ENCODE measurements at regions of chr1 and their contacts with region 1.

Region 1: GRCh38 chr1:41573785-41574713 is 89.6 kb upstream of the EDN2 start:
- DNase-seq: peak; percentile 8
- H3K4me3 ChIP-seq: no peak overlapping the region
- H3K27me3 ChIP-seq: no peaks in the 10 kb centered on the region
- CTCF ChIP-seq: peak; percentile 96

Region 2: DNA sequence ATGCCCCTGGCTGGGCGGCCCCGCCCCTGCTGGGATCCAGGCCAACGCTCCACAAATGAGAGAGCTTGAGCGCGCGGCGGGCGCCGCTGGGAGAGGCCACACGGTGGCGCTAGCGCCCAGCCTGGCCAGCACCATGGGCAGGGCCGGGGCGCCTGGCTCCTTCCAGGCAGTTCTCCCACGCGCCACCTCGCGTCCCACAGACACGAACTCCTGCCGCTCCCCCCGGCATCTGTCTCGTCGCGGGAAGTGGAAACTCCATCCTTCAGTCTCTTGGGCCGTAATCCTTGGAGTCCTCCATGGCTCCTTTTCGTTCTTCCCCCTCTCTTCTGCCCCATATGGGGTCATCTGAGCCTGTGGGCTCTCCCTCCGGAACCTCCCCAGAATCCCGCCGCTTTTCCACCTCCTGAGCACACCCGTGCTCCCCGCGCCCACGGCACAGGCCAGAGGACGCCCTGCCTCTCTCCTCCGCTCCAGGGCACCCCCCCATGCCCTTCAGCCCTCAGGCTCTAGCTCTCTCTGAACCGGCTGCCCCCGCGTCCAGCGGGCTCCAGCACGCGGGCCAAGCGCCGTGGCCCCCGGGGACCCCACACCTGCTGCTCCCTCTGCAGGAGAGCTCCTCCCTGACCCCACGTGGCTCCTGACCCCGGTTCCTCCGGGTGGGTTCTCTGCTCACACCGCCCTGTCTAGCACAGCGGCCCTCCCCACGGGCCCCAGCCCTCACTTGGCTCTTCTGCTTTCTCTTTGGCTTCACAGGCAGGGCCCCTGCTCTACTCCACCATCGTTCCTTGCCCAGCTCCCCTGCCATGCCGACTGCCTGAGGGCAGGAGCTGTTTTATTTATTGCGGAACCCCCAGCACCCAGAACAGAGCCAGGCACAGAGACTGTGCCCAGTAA is 57.6 kb before region 1 on chr1:
- CTCF ChIA-PET with region 1: interaction called, 11 read pairs
- POLR2A ChIA-PET with region 1: no interaction called
- DNase-seq: no peak
- H3K4me3 ChIP-seq: peak overlapping the region; percentile 31
- H3K27me3 ChIP-seq: no peaks in the 10 kb centered on the region
- CTCF ChIP-seq: peak; percentile 85

Region 3: GRCh38 chr1:41560496-41560895 is 13.6 kb before region 1 on chr1:
- CTCF ChIA-PET with region 1: interaction called, 12 read pairs
- POLR2A ChIA-PET with region 1: no interaction called
- DNase-seq: no peak
- H3K4me3 ChIP-seq: no peak overlapping the region
- H3K27me3 ChIP-seq: no peaks in the 10 kb centered on the region
- CTCF ChIP-seq: no peak

Region 4: GRCh38 chr1:41589395-41589794 is 15.3 kb after region 1 on chr1:
- CTCF ChIA-PET with region 1: interaction called, 13 read pairs
- POLR2A ChIA-PET with region 1: no interaction called
- DNase-seq: no peak
- H3K4me3 ChIP-seq: no peak overlapping the region
- H3K27me3 ChIP-seq: no peaks in the 10 kb centered on the region
- CTCF ChIP-seq: no peak

Region 5: GRCh38 chr1:41791667-41792484 is 217.8 kb after region 1 on chr1:
- CTCF ChIA-PET with region 1: interaction called, 60 read pairs
- POLR2A ChIA-PET with region 1: no interaction called
- DNase-seq: no peak
- H3K4me3 ChIP-seq: no peak overlapping the region
- H3K27me3 ChIP-seq: no peaks in the 10 kb centered on the region
- CTCF ChIP-seq: no peak

Region 6: DNA sequence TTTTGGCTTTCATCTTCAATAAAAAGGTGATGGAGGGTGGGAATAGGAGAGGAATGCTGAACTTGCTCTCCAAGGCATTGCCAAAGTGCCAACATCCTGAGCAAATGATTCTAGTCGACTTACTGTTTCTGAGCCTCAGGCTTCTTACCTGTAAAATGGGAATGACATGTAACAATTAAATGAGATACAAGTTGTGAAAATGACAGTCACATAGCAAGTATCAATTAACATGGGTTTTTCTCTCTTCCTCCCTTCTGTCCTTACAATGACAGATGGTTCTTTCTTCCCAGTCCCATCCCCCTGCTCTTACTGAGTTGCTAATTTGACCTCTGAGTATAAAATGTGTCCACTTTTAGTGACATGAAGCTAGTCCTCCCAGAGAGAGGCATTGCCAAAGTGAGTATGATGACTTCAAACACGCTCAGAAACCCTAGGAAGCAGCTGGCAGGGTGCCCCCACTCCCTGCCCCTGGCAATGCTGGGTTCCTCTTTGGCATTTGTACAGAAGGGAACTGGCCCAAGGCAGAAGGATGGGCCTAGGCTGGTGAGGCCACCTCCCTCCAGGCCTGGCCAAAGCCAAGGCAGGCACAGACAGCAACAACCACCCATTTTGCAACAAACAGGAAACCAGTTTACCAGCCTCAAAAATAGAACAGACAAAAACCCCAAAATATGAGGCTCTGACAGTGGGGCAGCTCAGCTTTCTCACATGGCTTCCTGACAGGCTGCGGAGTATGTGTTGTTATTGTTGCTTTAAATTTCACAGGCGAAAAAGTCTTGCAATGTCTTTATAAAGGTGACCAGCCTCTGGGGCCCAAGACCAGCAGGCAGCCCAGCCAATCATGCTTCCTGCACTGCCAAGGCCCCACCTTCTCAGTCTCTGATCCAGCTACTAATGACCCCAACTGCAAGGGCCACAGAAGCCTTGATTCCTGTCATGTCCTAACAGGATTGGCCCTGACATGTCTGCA is 228.8 kb after region 1 on chr1:
- CTCF ChIA-PET with region 1: interaction called, 60 read pairs
- POLR2A ChIA-PET with region 1: no interaction called
- DNase-seq: no peak
- H3K4me3 ChIP-seq: no peak overlapping the region
- H3K27me3 ChIP-seq: no peaks in the 10 kb centered on the region
- CTCF ChIP-seq: no peak

Region 7: DNA sequence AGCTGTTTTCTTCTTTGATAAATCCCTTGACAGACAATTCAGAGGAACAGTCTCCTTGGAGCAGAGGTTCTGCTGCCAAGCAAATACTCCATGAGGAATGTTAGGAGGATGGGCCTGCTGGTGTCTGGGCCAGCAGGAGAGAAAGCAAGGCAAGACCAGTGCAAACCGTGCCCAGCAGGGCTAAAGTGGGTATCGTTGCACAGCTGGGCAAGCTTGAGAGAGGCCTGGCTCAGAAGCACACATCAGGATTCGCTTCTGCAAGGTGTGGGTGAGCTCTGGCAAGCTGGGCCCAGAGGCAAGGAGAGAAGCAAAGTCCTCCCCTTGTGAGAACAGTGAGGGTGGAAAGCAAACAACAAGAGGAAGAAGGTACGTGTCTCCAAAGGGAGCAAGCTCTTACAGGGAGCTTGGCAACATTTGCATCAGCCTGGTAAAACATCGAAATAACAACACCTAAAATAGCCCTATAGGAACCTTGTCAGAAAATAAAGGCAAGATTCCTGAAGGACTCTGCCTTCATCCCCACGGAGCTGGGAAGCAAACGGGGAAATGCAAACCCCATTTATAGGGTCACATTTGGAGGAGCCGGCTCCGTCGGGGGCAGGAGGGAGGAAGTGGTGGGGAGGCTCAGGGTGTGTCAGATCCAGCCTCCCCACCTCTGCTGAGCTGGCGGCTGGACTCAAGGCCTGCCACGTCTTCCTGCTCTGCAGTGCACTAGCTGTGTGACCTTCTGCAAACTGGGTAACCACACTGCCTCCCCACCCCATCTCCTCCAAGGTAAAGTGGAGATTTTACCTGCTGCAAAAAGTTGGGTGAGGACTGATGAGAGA is 407.0 kb after region 1 on chr1:
- CTCF ChIA-PET with region 1: no interaction called
- POLR2A ChIA-PET with region 1: no interaction called
- DNase-seq: no peak
- H3K4me3 ChIP-seq: no peak overlapping the region
- H3K27me3 ChIP-seq: no peaks in the 10 kb centered on the region
- CTCF ChIP-seq: no peak